ENCODE measurements at regions of chr15 and their contacts with region 1.

Region 1: DNA sequence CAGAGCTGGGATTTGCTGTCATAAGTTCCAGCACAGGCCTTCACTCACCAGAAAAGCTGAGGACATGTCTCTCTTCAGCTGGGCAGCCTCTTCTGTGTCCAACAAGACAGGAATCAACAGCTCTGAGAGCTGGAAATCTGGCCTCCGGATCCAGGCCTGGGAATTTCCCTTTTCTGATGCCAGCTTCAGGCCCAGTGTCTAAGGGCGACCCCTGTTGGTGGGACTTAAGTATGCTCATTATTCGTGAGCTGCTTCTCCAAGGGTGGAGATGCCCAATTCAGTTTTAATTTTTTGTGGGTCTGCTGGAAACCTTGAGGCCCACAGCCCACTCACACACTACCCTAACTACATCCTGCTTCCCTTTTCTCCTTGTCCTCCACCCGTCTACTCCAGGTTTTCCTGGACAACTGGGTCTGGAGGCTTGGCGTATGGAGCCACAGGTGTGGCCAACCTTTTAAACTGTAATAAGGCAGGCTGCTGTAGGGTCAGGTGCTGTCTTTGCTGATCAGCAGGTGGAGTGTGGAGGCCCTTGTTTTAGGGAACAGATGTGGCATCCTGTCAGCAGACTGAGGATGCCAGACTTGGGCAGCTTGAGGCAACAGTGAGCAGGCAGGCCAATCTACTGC is 2.6 kb upstream of the CEMIP start:
- DNase-seq: peak; percentile 79

Region 2: GRCh38 chr15:80455668-80456442 is 320.7 kb before region 1 on chr15:
- intact Hi-C with region 1: loop called (anchors 2 kb)
- DNase-seq: no peak

Region 3: GRCh38 chr15:80567721-80568157 is 208.8 kb before region 1 on chr15:
- intact Hi-C with region 1: loop called (anchors 2 kb)
- DNase-seq: no peak

Region 4: DNA sequence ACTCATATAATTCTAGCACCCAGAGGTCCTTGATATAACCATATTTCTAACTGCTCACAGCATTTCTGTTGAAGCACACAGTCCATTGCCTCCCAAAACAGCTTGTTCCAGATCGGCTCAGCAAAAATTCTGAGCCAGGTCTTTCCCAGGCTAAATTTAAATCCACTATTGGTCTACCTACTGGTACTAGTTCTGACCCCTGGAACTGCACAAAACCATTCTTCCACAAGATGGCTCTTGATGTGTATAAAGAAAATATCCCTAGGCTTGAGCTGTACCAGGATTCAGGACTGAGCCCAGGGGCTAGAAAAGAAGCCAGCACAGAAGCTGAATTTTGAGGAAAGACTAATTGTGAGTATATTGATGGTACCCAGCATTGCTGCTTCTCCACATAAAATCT is 156.9 kb before region 1 on chr15:
- intact Hi-C with region 1: loop called (anchors 2 kb)
- DNase-seq: no peak

Region 5: DNA sequence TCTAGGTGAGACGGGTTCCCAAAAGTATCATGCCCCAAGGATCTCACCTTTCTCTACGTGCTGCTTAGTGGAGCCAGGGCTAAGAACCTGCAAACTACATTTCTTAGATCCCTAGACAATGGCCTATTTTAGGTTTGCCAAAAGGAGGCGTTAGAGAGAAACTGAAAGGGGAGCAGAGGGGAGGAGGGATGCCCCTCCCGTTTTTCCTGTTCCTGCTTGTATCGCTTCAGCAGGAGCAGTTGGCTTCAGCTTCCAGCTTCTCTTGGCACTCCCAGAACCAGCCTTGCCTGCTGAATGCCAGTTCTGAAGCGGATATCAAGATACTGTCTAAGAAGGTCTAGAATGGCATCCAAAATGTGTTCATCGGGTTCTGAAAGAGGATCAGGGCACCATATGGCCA is 139.9 kb before region 1 on chr15:
- intact Hi-C with region 1: loop called (anchors 5 kb)
- DNase-seq: no peak

Region 6: DNA sequence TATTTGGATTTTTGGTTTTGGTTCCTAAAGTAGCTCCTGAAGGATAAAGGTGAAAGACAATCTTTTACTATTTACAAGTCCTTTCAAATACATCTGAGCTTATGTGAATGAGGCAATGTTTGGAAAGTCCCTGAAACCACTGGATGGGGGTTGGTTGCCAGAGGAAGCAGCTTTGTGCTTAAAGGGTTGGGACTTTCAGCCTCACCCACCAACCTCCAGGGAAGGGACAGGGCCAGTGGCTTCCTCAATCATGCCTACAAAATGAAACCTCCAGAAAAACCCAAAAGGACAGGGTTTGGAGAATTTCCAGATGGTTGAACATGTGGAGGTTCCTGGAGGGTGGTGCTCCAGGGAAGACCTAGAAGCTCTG is 102.3 kb before region 1 on chr15:
- intact Hi-C with region 1: no loop called
- DNase-seq: no peak

Region 7: GRCh38 chr15:80695104-80695910 is 81.2 kb before region 1 on chr15 and contains the start of gene ABHD17C:
- intact Hi-C with region 1: loop called (anchors 1 kb)
- DNase-seq: peak; percentile 80
- total RNA-seq, gene ABHD17C: 8.5 TPM

Region 8: GRCh38 chr15:80747317-80748053 is 29.0 kb before region 1 on chr15:
- intact Hi-C with region 1: no loop called
- DNase-seq: no peak

Region 9: GRCh38 chr15:80856809-80857377 is 80.4 kb after region 1 on chr15:
- intact Hi-C with region 1: no loop called
- DNase-seq: peak; percentile 84

Region 10: GRCh38 chr15:80970018-80970658 is 193.6 kb after region 1 on chr15:
- intact Hi-C with region 1: loop called (anchors 2 kb)
- DNase-seq: no peak